CD8-positive, alpha-beta T cell (primary cell): ENCODE measurements at regions of chr6 and their contacts with region 1.

Region 1: DNA sequence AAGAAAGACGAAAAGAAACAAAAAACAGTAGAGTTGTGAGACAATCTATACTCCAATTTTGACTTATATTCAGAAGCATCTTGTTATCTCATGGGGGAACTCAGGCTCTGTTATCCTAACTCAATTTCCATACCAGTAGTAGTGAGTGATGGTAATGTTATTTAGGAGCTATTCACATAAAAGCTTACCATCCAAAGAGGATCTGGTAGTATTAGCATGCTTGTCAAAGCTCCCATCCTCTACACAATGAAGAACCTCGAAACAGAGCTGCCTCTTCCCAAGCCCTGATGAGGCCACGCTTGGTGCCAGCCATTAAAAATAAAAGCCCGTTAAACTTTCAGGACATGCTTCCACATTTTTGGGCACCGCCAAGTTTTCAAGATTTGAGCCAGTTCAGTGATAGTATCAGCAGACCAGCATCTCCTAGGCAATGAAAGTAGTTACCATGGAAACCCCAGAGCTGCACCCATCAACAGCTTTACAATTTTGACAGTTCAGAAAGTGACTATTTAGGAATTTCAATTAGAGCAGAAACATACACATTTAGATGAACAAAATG is 173.3 kb downstream of the CD83 start:
- DNase-seq: no peak
- ATAC-seq: no peak
- H3K4me3 ChIP-seq: no peak overlapping the region
- H3K4me3 Mint-ChIP-seq: peak overlapping the region; percentile 40
- H3K27ac ChIP-seq: no peak overlapping the region
- H3K27ac Mint-ChIP-seq: peak overlapping the region; percentile 9
- H3K4me1 ChIP-seq: peaks cover 12% of the 10 kb centered on the region
- H3K4me1 Mint-ChIP-seq: peaks cover 20% of the 10 kb centered on the region
- H3K27me3 ChIP-seq: no peaks in the 10 kb centered on the region
- H3K27me3 Mint-ChIP-seq: no peaks in the 10 kb centered on the region
- CTCF ChIP-seq: no peak

Region 2: DNA sequence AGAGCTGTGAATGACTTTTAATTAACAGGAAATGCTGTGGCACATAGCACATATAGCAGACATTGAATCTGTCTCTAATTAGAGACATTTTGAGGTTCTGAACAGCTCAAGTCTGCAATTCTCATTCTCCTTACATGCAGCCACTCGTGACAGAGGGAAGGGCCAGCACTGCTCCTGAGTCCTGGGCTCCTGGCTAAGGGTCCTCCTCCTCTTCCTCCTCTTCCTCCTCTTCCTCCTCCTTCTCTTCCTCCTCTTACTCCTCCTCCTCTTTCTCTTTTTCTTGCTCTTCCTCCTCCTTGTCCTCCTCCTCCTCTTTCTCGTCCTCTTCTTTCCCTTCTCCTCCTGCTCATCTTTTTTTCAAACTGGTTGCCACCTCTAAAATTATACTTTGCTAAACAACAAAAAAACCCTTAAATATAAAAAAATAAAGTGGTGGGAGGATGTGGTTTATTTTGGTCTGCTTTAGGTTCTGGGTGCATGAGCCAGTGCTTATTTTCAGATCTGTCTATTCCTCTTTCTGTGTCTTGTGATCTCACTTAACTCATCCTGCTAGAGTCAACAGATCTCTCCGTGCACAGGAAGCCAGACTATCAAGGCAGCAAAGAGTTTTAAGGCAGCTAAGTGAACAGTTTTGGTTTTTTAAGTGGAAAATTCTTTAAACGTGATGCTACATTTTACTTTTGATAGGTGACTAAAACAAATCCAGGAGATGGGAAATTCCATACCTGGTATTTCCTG is 14.0 kb before region 1 on chr6:
- CTCF ChIA-PET with region 1: interaction called, 4 read pairs
- POLR2A ChIA-PET with region 1: interaction called, 10 read pairs
- intact Hi-C with region 1: no loop called
- DNase-seq: peak in 5 of 9 experiments; percentile 18 to 82 (median 54)
- ATAC-seq: peak; percentile 98
- H3K4me3 ChIP-seq: peak overlapping the region in 1 of 2 experiments; percentile 4
- H3K4me3 Mint-ChIP-seq: peak overlapping the region; percentile 76
- H3K27ac ChIP-seq: peak overlapping the region; percentile 1 to 53
- H3K27ac Mint-ChIP-seq: peak overlapping the region; percentile 95
- H3K4me1 ChIP-seq: peaks cover 38% of the 10 kb centered on the region
- H3K4me1 Mint-ChIP-seq: peaks cover 48% of the 10 kb centered on the region
- H3K27me3 ChIP-seq: no peaks in the 10 kb centered on the region
- H3K27me3 Mint-ChIP-seq: no peaks in the 10 kb centered on the region
- CTCF ChIP-seq: no peak